MCF 10A (cell line): ENCODE measurements at regions of chr1 and their contacts with region 1.

Region 1: GRCh38 chr1:61077676-61078541 is 4.5 kb upstream of the NFIA start:
- DNase-seq: peak; percentile 100
- H3K4me3 Mint-ChIP-seq: peak overlapping the region; percentile 94
- H3K27ac Mint-ChIP-seq: peak overlapping the region; percentile 96
- H3K4me1 Mint-ChIP-seq: peaks cover 42% of the 10 kb centered on the region
- H3K27me3 Mint-ChIP-seq: no peaks in the 10 kb centered on the region
- CTCF ChIP-seq: no peak

Region 2: DNA sequence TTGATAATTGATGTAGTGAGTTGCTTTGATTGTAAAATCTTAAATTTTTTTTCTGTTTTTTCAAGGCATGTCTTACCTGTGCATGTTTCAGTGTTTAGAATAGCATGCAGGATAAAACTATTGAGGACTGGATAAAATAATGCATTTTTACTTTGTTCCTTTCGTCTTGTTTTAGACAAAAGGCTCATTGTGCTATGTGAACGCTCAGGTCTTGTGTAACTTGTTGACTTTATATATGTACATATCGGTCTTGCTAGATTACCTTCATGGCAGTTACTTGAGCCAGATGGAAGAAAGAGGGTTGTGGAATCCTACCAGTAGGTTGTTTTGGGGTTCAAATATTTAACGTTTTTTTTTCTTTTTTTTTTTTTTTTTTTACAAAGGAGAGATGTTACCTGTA is 11.4 kb after region 1 on chr1:
- CTCF ChIA-PET with region 1: interaction called, 4 read pairs
- POLR2A ChIA-PET with region 1: interaction called, 61 read pairs
- intact Hi-C with region 1: no loop called
- DNase-seq: no peak
- H3K4me3 Mint-ChIP-seq: no peak overlapping the region
- H3K27ac Mint-ChIP-seq: no peak overlapping the region
- H3K4me1 Mint-ChIP-seq: peaks cover 28% of the 10 kb centered on the region
- H3K27me3 Mint-ChIP-seq: no peaks in the 10 kb centered on the region
- CTCF ChIP-seq: no peak

Region 3: GRCh38 chr1:61120998-61121397 is 43.1 kb after region 1 on chr1:
- CTCF ChIA-PET with region 1: interaction called, 3 read pairs
- POLR2A ChIA-PET with region 1: interaction called, 86 read pairs
- intact Hi-C with region 1: no loop called
- DNase-seq: peak; percentile 70
- H3K4me3 Mint-ChIP-seq: peak overlapping the region; percentile 44
- H3K27ac Mint-ChIP-seq: peak overlapping the region; percentile 35
- H3K4me1 Mint-ChIP-seq: peaks cover 73% of the 10 kb centered on the region
- H3K27me3 Mint-ChIP-seq: no peaks in the 10 kb centered on the region
- CTCF ChIP-seq: no peak

Region 4: DNA sequence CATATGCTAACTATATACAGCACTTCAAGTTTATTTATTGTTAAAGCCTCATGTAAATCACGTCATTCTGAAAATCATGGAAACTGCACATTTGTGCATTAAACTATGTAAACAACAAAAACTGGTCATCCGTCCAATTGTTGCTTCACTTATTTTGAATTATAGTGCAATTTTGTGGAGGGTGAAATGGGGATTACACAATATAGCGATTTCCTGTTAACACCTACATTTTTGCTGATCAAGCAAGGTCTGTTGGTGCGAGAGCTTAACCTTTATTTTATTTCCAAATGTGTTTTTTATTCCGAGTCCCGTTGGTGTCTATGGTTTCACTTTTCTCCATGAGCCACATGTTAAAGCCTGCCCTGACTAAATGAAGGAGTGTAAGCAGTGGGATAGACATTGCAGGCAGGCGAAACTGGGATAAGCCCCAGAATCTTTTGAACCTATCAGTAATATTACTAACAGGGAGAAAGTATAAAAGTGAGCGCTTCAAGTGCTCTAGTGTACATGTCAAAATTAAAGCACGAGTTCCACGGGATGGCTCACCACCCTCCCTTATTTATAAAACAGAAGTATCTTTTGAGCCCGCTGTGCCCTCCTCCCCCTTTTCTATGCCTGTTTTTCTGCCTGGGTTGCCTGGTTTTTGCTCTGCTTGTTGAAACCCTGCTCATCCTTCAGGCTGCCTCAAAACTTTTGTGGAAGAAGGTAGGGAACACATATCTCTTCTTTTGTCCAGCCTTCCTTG is 125.1 kb after region 1 on chr1:
- CTCF ChIA-PET with region 1: no interaction called
- POLR2A ChIA-PET with region 1: interaction called, 15 read pairs
- intact Hi-C with region 1: no loop called
- DNase-seq: peak; percentile 75
- H3K4me3 Mint-ChIP-seq: peak overlapping the region; percentile 57
- H3K27ac Mint-ChIP-seq: peak overlapping the region; percentile 85
- H3K4me1 Mint-ChIP-seq: peaks cover 15% of the 10 kb centered on the region
- H3K27me3 Mint-ChIP-seq: no peaks in the 10 kb centered on the region
- CTCF ChIP-seq: no peak

Region 5: GRCh38 chr1:61277121-61277690 is 199.3 kb after region 1 on chr1:
- CTCF ChIA-PET with region 1: no interaction called
- POLR2A ChIA-PET with region 1: no interaction called
- intact Hi-C with region 1: no loop called
- DNase-seq: no peak
- H3K4me3 Mint-ChIP-seq: no peak overlapping the region
- H3K27ac Mint-ChIP-seq: no peak overlapping the region
- H3K4me1 Mint-ChIP-seq: no peaks in the 10 kb centered on the region
- H3K27me3 Mint-ChIP-seq: no peaks in the 10 kb centered on the region
- CTCF ChIP-seq: no peak

Region 6: DNA sequence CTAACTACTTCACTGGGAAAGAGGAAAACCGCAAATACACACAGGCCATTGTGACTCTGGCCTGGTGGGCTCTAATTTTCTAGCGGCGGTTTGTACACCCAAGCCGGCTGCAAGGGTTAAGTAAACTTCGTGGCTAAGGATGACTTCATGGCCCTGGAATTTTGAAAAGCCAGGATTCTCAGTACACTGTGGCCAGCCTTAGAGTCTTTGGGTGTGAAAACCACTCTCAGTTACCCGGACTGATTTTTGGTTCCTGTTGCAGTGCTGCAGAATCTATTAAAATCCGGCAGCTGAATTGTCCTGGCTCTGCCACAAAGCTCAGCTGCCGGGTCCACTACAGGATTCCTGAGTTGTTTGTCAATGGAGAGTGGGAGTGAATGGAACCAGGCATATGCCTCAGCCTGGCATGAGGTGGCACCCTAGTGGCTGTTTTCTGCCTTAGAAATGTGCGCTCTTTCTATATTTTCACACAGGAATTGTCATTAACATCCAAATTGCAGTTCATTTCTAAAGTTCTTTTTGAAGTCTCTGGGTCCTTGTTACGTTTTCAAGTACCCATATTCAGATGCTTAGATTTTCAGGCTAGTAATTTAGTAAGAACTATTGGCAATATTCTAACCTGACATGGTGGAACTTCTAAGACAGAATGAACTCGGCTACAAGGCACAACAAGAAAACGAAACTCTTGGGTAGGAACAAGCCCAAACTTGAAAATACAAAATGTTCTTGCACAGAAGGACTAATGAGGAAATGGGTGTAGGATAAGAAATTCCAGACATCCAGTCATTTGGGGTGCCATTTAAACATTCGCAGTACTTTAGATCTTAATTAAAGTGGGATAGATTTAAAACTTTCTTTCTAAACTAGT is 260.3 kb after region 1 on chr1:
- CTCF ChIA-PET with region 1: interaction called, 41 read pairs
- POLR2A ChIA-PET with region 1: interaction called, 96 read pairs
- intact Hi-C with region 1: loop called (anchors 1 kb)
- DNase-seq: peak; percentile 91
- H3K4me3 Mint-ChIP-seq: peak overlapping the region; percentile 70
- H3K27ac Mint-ChIP-seq: peak overlapping the region; percentile 96
- H3K4me1 Mint-ChIP-seq: peaks cover 28% of the 10 kb centered on the region
- H3K27me3 Mint-ChIP-seq: no peaks in the 10 kb centered on the region
- CTCF ChIP-seq: peak; percentile 81